Activated naive CD4-positive, alpha-beta T cell treated with anti-CD3 and anti-CD28 coated beads for 36 hours (primary cell): ENCODE measurements at regions of chr20 and their contacts with region 1.

Region 1: DNA sequence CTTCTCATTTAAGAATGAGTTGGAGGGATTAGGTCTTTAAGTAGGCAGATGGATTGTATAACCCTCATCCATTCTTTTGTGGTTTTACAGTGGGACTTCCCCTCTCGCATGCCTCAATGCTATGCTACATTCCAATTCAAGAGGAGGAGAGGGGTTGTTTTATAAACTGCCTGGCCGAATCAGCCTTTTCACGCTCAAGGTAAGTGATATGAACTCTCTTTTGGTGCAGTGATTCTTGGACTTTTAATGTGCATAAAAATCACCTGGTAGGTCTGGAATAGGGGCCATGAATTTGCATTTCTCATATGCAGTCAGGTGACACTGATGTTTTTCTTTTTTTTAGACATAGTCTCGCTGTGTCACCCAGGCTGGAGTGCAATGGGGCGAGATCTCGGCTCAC is 10.8 kb downstream of the ASXL1 start:
- DNase-seq: no peak
- H3K4me3 Mint-ChIP-seq: peak overlapping the region; percentile 20
- H3K27ac Mint-ChIP-seq: no peak overlapping the region
- H3K4me1 Mint-ChIP-seq: peaks cover 49% of the 10 kb centered on the region
- H3K27me3 Mint-ChIP-seq: no peaks in the 10 kb centered on the region

Region 2: GRCh38 chr20:32387252-32387651 is 18.3 kb after region 1 on chr20:
- CTCF ChIA-PET with region 1: no interaction called
- intact Hi-C with region 1: loop called (anchors 2 kb)
- DNase-seq: peak; percentile 45
- H3K4me3 Mint-ChIP-seq: no peak overlapping the region
- H3K27ac Mint-ChIP-seq: no peak overlapping the region
- H3K4me1 Mint-ChIP-seq: peaks cover 62% of the 10 kb centered on the region
- H3K27me3 Mint-ChIP-seq: no peaks in the 10 kb centered on the region

Region 3: DNA sequence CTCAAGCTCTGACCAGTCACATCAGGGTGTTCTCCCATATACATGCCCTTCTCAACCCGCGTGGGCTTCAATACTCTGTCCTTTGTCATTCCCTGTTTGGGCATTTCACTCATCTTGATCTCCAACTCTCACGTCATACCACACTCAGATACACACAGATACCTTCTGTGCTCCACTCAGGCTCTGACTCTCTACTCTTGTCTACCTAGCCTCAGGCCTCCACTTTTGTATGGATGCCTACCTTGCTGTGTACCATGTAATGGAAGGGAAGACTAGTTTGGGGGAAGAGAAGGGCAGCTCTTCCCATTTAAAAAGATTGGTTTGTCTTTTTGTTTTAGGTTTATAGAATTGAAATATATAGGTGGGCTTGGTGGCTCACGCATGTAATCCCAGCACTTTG is 37.8 kb after region 1 on chr20:
- CTCF ChIA-PET with region 1: no interaction called
- intact Hi-C with region 1: loop called (anchors 2 kb)
- DNase-seq: no peak
- H3K4me3 Mint-ChIP-seq: no peak overlapping the region
- H3K27ac Mint-ChIP-seq: peak overlapping the region; percentile 7
- H3K4me1 Mint-ChIP-seq: peaks cover 47% of the 10 kb centered on the region
- H3K27me3 Mint-ChIP-seq: no peaks in the 10 kb centered on the region

Region 4: GRCh38 chr20:32418376-32418775 is 49.5 kb after region 1 on chr20:
- CTCF ChIA-PET with region 1: no interaction called
- intact Hi-C with region 1: loop called (anchors 2 kb)
- DNase-seq: no peak
- H3K4me3 Mint-ChIP-seq: no peak overlapping the region
- H3K27ac Mint-ChIP-seq: no peak overlapping the region
- H3K4me1 Mint-ChIP-seq: peaks cover 50% of the 10 kb centered on the region
- H3K27me3 Mint-ChIP-seq: no peaks in the 10 kb centered on the region